ENCODE measurements at regions of chr4 and their contacts with region 1.

Region 1: GRCh38 chr4:121711263-121712000 is 14.7 kb upstream of the ANXA5 start:
- DNase-seq: peak; percentile 97
- H3K4me3 ChIP-seq: peak overlapping the region; percentile 28
- H3K27ac ChIP-seq: peak overlapping the region; percentile 83
- H3K4me1 ChIP-seq: peaks cover 14% of the 10 kb centered on the region
- H3K27me3 ChIP-seq: no peaks in the 10 kb centered on the region
- CTCF ChIP-seq: no peak

Region 2: GRCh38 chr4:121696581-121697461 is 14.6 kb before region 1 on chr4 and contains the start of gene ANXA5:
- CTCF ChIA-PET with region 1: no interaction called
- POLR2A ChIA-PET with region 1: interaction called, 3 read pairs
- intact Hi-C with region 1: loop called (anchors 2 kb)
- DNase-seq: peak; percentile 91
- H3K4me3 ChIP-seq: peak within 1 kb of the TSS; percentile 73
- H3K27ac ChIP-seq: peak within 1 kb of the TSS; percentile 95
- H3K4me1 ChIP-seq: peaks cover 44% of the 10 kb centered on the region
- H3K27me3 ChIP-seq: no peaks in the 10 kb centered on the region
- CTCF ChIP-seq: peak; percentile 18; the same call in 1 of the 2 replicates
- total RNA-seq, gene ANXA5: 332 and 389 TPM in 2 replicates

Region 3: DNA sequence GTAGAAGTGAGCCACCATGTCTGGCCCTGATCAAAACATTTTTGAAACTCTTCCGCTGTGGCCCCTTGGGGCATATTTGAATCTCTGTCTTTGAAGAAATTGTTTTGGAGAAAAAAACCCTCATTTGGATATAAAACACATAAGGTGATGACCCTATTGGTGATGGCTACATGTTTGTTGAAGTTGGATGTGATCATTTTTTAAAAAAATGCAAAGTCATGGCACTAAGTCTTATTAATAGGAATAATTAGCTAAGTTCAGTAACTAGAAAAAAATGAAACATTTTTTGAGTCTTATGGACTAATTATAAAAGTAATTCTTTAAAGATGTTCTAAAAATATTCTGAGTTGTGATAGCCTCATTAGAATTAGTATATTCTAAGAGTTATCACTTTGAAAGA is 176.7 kb after region 1 on chr4:
- CTCF ChIA-PET with region 1: no interaction called
- POLR2A ChIA-PET with region 1: no interaction called
- intact Hi-C with region 1: no loop called
- DNase-seq: no peak
- H3K4me3 ChIP-seq: no peak overlapping the region
- H3K27ac ChIP-seq: no peak overlapping the region
- H3K4me1 ChIP-seq: no peaks in the 10 kb centered on the region
- H3K27me3 ChIP-seq: no peaks in the 10 kb centered on the region
- CTCF ChIP-seq: no peak